ENCODE measurements at regions of chr6 and their contacts with region 1.

Region 1: GRCh38 chr6:14876778-14877613 is 368.9 kb upstream of the JARID2 start:
- DNase-seq: peak; percentile 52
- ATAC-seq: peak; percentile 74
- H3K4me3 Mint-ChIP-seq: peak overlapping the region; percentile 47
- H3K27ac Mint-ChIP-seq: peak overlapping the region; percentile 99
- H3K4me1 Mint-ChIP-seq: peaks cover 78% of the 10 kb centered on the region
- H3K27me3 Mint-ChIP-seq: no peaks in the 10 kb centered on the region

Region 2: GRCh38 chr6:14423330-14423729 is 453.7 kb before region 1 on chr6:
- CTCF ChIA-PET with region 1: no interaction called
- POLR2A ChIA-PET with region 1: no interaction called
- intact Hi-C with region 1: loop called in 1 of 2 experiments (anchors 1 kb)
- DNase-seq: no peak
- ATAC-seq: no peak
- H3K4me3 Mint-ChIP-seq: no peak overlapping the region
- H3K27ac Mint-ChIP-seq: peak overlapping the region; percentile 96
- H3K4me1 Mint-ChIP-seq: peaks cover 54% of the 10 kb centered on the region
- H3K27me3 Mint-ChIP-seq: no peaks in the 10 kb centered on the region

Region 3: DNA sequence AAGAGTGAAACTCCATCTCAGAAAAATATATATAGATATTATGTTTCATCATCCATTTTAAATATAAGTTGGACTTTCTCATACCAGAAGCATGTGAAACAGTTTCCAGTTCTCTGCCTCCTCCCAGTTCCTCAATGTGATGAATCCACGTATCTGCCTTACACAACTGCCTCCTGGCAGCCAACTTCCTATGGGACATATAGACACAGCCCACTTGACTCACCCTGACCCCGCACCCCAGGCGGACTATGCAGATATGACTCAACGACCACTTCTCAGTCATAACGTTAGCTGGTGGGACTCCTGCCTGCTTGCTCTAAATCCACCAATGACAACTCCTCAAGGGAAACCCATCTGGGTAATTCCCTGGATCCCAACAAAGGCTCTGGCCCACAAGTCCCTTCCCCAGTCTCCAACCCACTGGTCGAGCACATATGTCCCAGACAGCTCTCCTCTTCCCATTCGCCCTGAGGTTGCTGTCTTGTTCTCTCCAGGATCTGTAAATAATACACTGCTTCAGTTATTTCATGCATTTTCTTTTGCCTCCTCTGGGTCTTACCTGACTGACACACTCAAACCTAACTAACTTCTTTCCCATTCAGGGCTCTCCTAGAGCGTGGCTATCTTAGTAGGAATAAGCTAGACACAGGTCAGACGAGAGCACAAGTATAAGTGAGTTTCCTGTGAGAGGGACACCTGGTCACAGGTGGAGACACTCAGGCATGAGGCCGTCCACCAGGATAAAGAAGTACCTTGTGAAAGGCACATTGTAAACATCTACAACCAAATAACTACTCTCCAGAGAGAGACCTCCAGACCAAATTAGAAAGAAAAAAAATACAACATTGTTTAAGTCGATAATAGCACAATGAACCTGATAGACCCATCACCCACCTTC is 210.9 kb before region 1 on chr6:
- CTCF ChIA-PET with region 1: no interaction called
- POLR2A ChIA-PET with region 1: no interaction called
- intact Hi-C with region 1: loop called in 1 of 2 experiments (anchors 2 kb)
- DNase-seq: peak; percentile 81
- ATAC-seq: peak; percentile 79
- H3K4me3 Mint-ChIP-seq: no peak overlapping the region
- H3K27ac Mint-ChIP-seq: no peak overlapping the region
- H3K4me1 Mint-ChIP-seq: peaks cover 32% of the 10 kb centered on the region
- H3K27me3 Mint-ChIP-seq: no peaks in the 10 kb centered on the region

Region 4: DNA sequence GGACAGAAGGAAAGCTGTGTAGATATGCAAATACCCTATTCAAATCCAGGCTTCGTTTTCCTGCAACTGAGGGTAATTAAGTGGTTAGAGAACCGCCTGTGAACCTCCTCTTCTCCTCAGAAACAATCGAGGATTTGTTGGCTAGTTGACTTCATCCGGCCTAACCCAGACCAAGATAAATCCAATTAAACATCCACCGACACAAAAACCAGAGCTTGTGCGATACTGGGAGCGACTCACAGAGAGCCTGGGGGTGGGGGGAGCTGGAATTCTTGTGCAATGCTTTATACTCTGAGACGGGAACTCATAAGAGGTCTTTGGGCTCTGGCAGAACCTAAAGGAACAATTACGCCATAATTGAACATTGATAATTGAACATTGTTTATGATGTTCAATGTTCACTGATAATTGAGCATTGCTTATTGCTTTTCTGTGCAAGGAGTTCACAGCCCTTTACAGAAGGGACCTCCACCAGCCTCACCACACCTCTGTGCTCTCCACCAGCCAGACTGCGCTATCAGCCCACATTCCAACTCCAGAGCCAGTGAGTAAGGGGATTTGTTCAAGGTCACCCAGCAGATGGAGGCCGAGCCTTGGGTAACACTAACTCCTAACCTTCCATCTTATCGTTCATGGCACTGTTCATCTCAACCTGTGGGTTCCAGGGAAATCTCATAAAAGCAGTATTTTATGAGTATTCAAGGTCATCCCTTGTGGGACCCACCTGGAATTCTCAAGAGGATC is 60.7 kb before region 1 on chr6:
- CTCF ChIA-PET with region 1: no interaction called
- POLR2A ChIA-PET with region 1: no interaction called
- intact Hi-C with region 1: loop called (anchors 1 kb)
- DNase-seq: no peak
- ATAC-seq: no peak
- H3K4me3 Mint-ChIP-seq: no peak overlapping the region
- H3K27ac Mint-ChIP-seq: no peak overlapping the region
- H3K4me1 Mint-ChIP-seq: peaks cover 18% of the 10 kb centered on the region
- H3K27me3 Mint-ChIP-seq: no peaks in the 10 kb centered on the region

Region 5: GRCh38 chr6:14910692-14911547 is 33.9 kb after region 1 on chr6:
- CTCF ChIA-PET with region 1: no interaction called
- POLR2A ChIA-PET with region 1: no interaction called
- intact Hi-C with region 1: no loop called
- DNase-seq: peak; percentile 28
- ATAC-seq: peak; percentile 80
- H3K4me3 Mint-ChIP-seq: no peak overlapping the region
- H3K27ac Mint-ChIP-seq: peak overlapping the region; percentile 83
- H3K4me1 Mint-ChIP-seq: peaks cover 23% of the 10 kb centered on the region
- H3K27me3 Mint-ChIP-seq: no peaks in the 10 kb centered on the region

Region 6: DNA sequence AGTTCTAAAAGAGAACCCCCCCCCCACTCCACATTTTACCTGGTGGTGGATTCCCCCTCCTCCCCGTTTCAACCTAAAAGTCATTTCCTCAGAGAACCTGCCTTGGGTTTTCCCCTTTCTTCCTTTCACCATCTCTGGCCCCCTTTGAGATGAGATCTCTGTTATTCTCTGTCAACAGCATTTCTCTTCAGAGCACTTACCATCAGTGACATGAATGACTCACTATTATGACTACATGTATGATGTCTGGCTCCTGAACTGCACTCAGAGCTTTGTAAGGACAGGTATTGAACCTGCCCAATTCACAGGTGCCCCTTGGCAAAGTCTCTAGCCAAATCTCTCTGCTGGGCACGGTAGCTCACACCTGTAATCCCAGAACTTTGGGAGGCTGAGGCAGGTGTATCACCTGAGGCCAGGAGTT is 307.5 kb after region 1 on chr6:
- CTCF ChIA-PET with region 1: no interaction called
- POLR2A ChIA-PET with region 1: interaction called, 8 read pairs
- intact Hi-C with region 1: loop called in 1 of 2 experiments (anchors 1 kb)
- DNase-seq: peak; percentile 62
- ATAC-seq: peak; percentile 98
- H3K4me3 Mint-ChIP-seq: peak overlapping the region; percentile 23
- H3K27ac Mint-ChIP-seq: peak overlapping the region; percentile 96
- H3K4me1 Mint-ChIP-seq: peaks cover 23% of the 10 kb centered on the region
- H3K27me3 Mint-ChIP-seq: no peaks in the 10 kb centered on the region

Region 7: DNA sequence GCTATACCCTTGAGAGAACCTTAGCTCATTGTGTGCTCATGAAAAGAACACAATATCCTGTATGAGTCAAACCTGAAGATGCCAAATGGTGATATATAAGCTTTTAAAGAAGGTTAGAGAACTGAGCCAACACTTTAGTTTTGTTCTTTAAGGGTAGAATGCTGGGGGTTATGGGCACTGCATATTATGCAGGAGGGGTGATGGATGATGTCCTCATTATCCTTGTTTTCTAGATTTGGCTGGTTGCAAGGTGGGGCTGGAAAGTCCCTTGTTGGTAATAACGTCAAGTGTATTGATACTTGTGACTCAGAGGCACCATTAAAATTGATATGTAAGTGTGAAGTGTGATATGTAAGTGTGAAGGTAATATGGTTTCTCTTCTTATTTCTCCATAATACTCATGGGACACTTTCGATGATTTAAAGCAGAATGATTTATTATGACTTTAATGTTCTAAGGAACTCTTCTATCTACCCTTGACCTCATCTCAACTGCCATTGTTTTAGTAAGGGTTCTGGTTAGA is 899.5 kb after region 1 on chr6:
- CTCF ChIA-PET with region 1: interaction called, 3 read pairs
- POLR2A ChIA-PET with region 1: no interaction called
- intact Hi-C with region 1: loop called in 1 of 2 experiments (anchors 2 kb)
- DNase-seq: peak; percentile 71
- ATAC-seq: peak; percentile 89
- H3K4me3 Mint-ChIP-seq: peak overlapping the region; percentile 59
- H3K27ac Mint-ChIP-seq: peak overlapping the region; percentile 92
- H3K4me1 Mint-ChIP-seq: peaks cover 73% of the 10 kb centered on the region
- H3K27me3 Mint-ChIP-seq: no peaks in the 10 kb centered on the region

Measured in activated CD4-positive, alpha-beta T cell treated with anti-CD3 and anti-CD28 coated beads for 36 hours (primary cell).